Naive thymus-derived CD4-positive, alpha-beta T cell (primary cell): ENCODE measurements at regions of chrX and their contacts with region 1.

Region 1: GRCh38 chrX:46611658-46612362 is 38.2 kb downstream of the CHST7 start:
- DNase-seq: peak in 6 of 9 donors; percentile 49 to 71 (median 62)
- ATAC-seq: peak; percentile 84
- H3K4me3 ChIP-seq: peak overlapping the region; percentile 35
- H3K4me3 Mint-ChIP-seq: peak overlapping the region; percentile 22 to 80 (median 71)
- H3K27ac ChIP-seq: no peak overlapping the region
- H3K27ac Mint-ChIP-seq: peak overlapping the region in 4 of 9 donors; percentile 5 to 85 (median 41)
- H3K4me1 ChIP-seq: peaks cover 21 to 29% of the 10 kb centered on the region in 2 donors
- H3K4me1 Mint-ChIP-seq: peaks cover 8 to 63% (median 31%) of the 10 kb centered on the region in 7 donors
- H3K27me3 ChIP-seq: no peaks in the 10 kb centered on the region
- H3K27me3 Mint-ChIP-seq: peaks cover 0 to 17% (median under 1%) of the 10 kb centered on the region in 5 donors

Region 2: DNA sequence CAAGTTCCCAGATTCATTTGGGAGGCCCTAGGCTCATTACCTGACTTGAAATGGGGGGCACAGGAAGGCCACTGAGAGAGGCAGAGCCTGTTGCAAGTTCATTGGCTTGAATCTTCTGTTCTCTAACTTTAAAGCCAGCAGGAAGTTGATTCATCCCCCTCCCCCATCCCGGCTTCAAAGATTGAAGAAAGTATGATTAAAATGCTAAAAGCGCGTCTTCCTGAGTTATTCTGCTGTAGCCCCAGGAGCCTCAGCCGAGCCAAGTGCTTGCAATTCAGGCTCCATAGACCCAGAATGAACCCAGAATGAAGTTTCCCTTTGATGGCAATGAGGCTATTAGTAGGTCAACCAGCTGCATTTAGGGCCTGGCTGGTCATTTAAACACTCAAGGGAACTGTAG is 23.5 kb before region 1 on chrX:
- CTCF ChIA-PET with region 1: no interaction called
- POLR2A ChIA-PET with region 1: interaction called, 6 read pairs
- intact Hi-C with region 1: loop called in 1 of 2 experiments (anchors 1 kb)
- DNase-seq: peak in 8 of 9 donors; percentile 30 to 60 (median 48)
- ATAC-seq: peak; percentile 27
- H3K4me3 ChIP-seq: peak overlapping the region; percentile 28
- H3K4me3 Mint-ChIP-seq: peak overlapping the region; percentile 68 to 86 (median 78)
- H3K27ac ChIP-seq: peak overlapping the region; percentile 44
- H3K27ac Mint-ChIP-seq: peak overlapping the region; percentile 69 to 87 (median 85)
- H3K4me1 ChIP-seq: peaks cover 16% of the 10 kb centered on the region in 2 donors
- H3K4me1 Mint-ChIP-seq: peaks cover 7 to 49% (median 32%) of the 10 kb centered on the region in 7 donors
- H3K27me3 ChIP-seq: no peaks in the 10 kb centered on the region
- H3K27me3 Mint-ChIP-seq: no peaks in the 10 kb centered on the region

Region 3: DNA sequence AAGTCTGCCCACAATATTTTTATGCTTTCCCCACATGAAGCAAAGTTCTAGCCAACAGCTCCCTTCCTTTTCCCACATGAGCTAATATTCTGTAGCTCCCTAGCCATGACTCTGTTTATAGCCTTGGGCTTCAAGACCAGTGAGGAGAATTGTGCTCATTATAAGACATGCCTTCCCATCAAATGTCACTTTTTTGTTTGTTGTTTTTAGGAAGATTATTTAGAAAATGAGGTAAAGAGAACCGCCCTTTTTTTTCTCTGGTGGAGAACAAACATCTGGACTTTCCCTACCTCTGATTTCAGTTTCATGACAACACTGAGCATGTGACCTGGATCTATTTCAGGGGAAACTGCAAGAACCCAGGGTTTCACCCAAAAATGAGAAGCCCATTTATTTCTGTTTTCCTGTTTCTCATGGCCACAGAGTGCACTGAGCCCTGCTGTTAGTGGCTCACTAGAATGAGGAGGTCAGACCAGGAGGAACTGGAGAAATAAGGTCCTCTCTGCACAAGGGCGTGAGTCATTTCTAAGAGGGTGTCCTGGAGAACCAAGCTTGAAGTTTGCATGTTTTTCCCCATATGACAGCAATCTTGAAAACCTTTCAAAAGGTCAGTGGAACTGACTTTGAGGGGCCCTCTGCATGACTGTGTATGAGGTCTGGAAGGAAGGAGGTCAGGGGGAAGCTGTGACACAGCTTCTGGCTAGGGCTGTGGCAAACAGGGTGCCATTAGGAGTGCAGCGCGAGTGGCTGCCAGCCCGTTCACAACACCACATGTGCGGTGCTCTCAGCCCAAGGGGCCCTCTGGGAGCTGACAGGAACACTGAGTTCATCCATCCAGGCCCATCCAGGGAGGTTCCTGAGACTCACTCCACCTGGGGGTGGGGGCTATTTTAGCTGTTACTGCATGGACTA is 16.9 kb after region 1 on chrX:
- CTCF ChIA-PET with region 1: no interaction called
- POLR2A ChIA-PET with region 1: interaction called, 4 read pairs
- intact Hi-C with region 1: loop called in 1 of 2 experiments (anchors 1 kb)
- DNase-seq: peak in 1 of 9 donors; percentile 36
- ATAC-seq: peak; percentile 83
- H3K4me3 ChIP-seq: no peak overlapping the region
- H3K4me3 Mint-ChIP-seq: peak overlapping the region in 1 of 10 donors; percentile 76
- H3K27ac ChIP-seq: no peak overlapping the region
- H3K27ac Mint-ChIP-seq: peak overlapping the region in 1 of 9 donors; percentile 92
- H3K4me1 ChIP-seq: peaks cover 0 to 6% of the 10 kb centered on the region in 2 donors
- H3K4me1 Mint-ChIP-seq: peaks cover 0 to 43% (median 9%) of the 10 kb centered on the region in 7 donors
- H3K27me3 ChIP-seq: no peaks in the 10 kb centered on the region
- H3K27me3 Mint-ChIP-seq: peaks cover 0 to 2% (median 0%) of the 10 kb centered on the region in 5 donors

Region 4: DNA sequence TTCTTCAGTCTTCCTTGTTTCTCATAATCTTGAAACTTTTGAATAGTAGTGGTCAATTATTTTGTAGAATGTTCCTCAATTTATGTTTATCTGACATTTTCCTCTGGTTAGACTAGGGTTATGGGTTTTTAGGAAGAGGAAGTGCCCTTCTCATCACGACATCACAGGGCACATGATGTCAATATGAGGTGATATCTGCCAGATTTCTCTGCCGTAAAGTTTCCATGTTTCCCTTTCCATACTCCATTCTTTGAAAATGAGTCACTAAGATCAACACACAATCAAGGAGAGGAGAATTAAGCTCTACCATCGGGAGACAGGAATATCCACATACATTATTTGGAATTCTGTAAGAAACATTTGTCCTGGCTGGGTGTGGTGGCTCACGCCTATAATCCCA is 253.5 kb after region 1 on chrX:
- CTCF ChIA-PET with region 1: no interaction called
- POLR2A ChIA-PET with region 1: no interaction called
- intact Hi-C with region 1: no loop called
- DNase-seq: no peak
- ATAC-seq: peak; percentile 57
- H3K4me3 ChIP-seq: no peak overlapping the region
- H3K4me3 Mint-ChIP-seq: no peak overlapping the region
- H3K27ac ChIP-seq: no peak overlapping the region
- H3K27ac Mint-ChIP-seq: no peak overlapping the region
- H3K4me1 ChIP-seq: no peaks in the 10 kb centered on the region
- H3K4me1 Mint-ChIP-seq: peaks cover 0 to 4% (median 0%) of the 10 kb centered on the region in 7 donors
- H3K27me3 ChIP-seq: no peaks in the 10 kb centered on the region
- H3K27me3 Mint-ChIP-seq: no peaks in the 10 kb centered on the region